Activated CD8-positive, alpha-beta T cell treated with anti-CD3 and anti-CD28 coated beads for 36 hours (primary cell): ENCODE measurements at regions of chr2 and their contacts with region 1.

Region 1: DNA sequence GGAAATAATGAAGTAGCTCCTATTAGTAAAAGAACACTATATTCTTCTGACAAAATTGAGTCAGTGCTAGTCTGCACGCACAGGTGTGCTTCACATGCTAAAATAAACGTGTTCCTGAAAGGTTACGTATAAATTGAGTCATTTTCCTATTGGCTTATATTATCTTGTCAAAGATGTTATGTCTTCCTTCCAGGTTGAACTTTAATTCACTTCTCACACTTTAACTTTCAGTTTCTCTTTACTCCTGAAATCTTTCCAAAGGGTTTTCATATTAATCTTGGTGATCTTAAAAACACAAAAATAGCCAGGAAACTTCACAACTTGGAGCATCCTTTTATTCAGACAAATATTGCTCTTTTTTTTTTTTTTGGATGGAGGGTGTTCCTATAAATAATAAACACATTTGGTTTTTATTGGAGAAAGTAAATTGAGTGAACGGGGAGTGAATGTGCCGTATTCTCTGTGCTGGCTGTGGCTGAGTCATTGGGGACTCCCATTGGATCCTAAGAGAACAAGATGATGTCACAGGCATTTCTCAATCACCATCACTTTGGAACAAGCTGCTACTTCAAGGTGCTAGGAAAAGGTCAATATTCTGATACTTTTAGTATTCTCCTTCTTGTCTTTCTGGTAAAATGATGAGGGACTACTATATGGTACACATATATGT is 150.2 kb upstream of the SPATS2L start:
- DNase-seq: no peak
- ATAC-seq: no peak
- H3K4me3 Mint-ChIP-seq: no peak overlapping the region
- H3K27ac Mint-ChIP-seq: no peak overlapping the region
- H3K4me1 Mint-ChIP-seq: no peaks in the 10 kb centered on the region
- H3K27me3 Mint-ChIP-seq: peaks cover 2% of the 10 kb centered on the region
- CTCF ChIP-seq: no peak

Region 2: GRCh38 chr2:199985625-199986207 is 170.6 kb before region 1 on chr2:
- CTCF ChIA-PET with region 1: no interaction called
- POLR2A ChIA-PET with region 1: no interaction called
- intact Hi-C with region 1: loop called (anchors 10 kb)
- DNase-seq: peak; percentile 82
- ATAC-seq: peak; percentile 96
- H3K4me3 Mint-ChIP-seq: no peak overlapping the region
- H3K27ac Mint-ChIP-seq: no peak overlapping the region
- H3K4me1 Mint-ChIP-seq: no peaks in the 10 kb centered on the region
- H3K27me3 Mint-ChIP-seq: no peaks in the 10 kb centered on the region
- CTCF ChIP-seq: peak; percentile 56